Panc1 (cell line): ENCODE measurements at regions of chr4 and their contacts with region 1.

Region 1: GRCh38 chr4:73258686-73259570 is at the start of gene ANKRD17:
- DNase-seq: peak; percentile 67
- ATAC-seq: peak; percentile 92
- H3K4me3 ChIP-seq: peak within 1 kb of the TSS; percentile 73 to 76
- H3K27ac ChIP-seq: peak within 1 kb of the TSS; percentile 96
- H3K4me1 ChIP-seq: peaks cover 8% of the 10 kb centered on the region; the same call in 1 of the 2 replicates
- H3K27me3 ChIP-seq: no peaks in the 10 kb centered on the region
- CTCF ChIP-seq: peak; percentile 11; the same call in 1 of the 2 replicates
- total RNA-seq, gene ANKRD17: 38.5 TPM

Region 2: GRCh38 chr4:72352403-72353105 is 906.4 kb before region 1 on chr4:
- CTCF ChIA-PET with region 1: no interaction called
- POLR2A ChIA-PET with region 1: no interaction called
- in situ Hi-C with region 1: no loop called
- intact Hi-C with region 1: no loop called
- DNase-seq: no peak
- ATAC-seq: no peak
- H3K4me3 ChIP-seq: no peak overlapping the region
- H3K27ac ChIP-seq: no peak overlapping the region
- H3K4me1 ChIP-seq: no peaks in the 10 kb centered on the region
- H3K27me3 ChIP-seq: no peaks in the 10 kb centered on the region
- CTCF ChIP-seq: no peak

Region 3: GRCh38 chr4:73142995-73143547 is 115.9 kb before region 1 on chr4:
- CTCF ChIA-PET with region 1: no interaction called
- POLR2A ChIA-PET with region 1: no interaction called
- in situ Hi-C with region 1: no loop called
- intact Hi-C with region 1: loop called (anchors 5 kb)
- DNase-seq: no peak
- ATAC-seq: no peak
- H3K4me3 ChIP-seq: no peak overlapping the region
- H3K27ac ChIP-seq: no peak overlapping the region
- H3K4me1 ChIP-seq: no peaks in the 10 kb centered on the region
- H3K27me3 ChIP-seq: no peaks in the 10 kb centered on the region
- CTCF ChIP-seq: peak; percentile 27; the same call in 1 of the 2 replicates

Region 4: DNA sequence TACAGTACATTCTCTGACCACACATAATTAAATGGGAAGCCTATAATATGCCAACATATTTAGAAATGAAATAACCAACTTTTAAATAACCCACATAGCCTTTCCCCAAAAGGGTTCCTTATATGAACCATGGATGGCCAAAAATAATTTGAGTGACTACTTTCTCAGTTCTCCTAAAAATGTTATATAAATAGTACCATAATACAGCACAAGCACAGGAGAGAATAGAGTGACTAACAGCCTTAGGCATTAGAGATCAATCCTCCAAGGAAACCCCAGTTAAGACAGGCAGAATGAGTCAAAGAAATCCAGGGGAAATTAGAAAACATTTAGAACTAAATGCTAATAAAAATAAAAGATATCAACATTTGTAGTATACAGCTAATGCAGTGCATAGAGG is 50.6 kb before region 1 on chr4:
- CTCF ChIA-PET with region 1: no interaction called
- POLR2A ChIA-PET with region 1: interaction called, 10 read pairs
- in situ Hi-C with region 1: no loop called
- intact Hi-C with region 1: no loop called
- DNase-seq: no peak
- ATAC-seq: no peak
- H3K4me3 ChIP-seq: no peak overlapping the region
- H3K27ac ChIP-seq: no peak overlapping the region
- H3K4me1 ChIP-seq: no peaks in the 10 kb centered on the region
- H3K27me3 ChIP-seq: no peaks in the 10 kb centered on the region
- CTCF ChIP-seq: no peak